ENCODE measurements at regions of chr12 and their contacts with region 1.

Region 1: DNA sequence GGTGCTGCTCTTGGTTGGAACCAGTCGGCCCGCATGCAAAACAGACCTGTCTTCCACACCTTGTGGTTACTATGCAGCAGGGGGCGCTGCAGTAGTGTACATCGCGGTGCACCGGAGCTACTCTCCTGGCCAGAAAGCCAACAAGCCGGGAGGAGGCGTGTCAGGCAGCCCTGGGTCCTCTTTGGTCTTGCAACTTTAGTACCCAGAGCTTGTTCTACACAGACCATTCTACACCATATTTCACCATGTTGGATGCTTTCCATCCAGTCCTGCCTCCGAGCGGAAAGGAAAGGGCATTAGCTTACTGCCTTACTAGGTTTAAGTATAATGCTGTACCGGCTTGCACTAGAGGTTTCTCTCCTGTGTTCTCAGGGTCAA is 927 bp upstream of the TMTC2 start:
- DNase-seq: peak; percentile 96

Region 2: GRCh38 chr12:82486524-82487235 is 199.1 kb before region 1 on chr12:
- intact Hi-C with region 1: no loop called
- DNase-seq: no peak

Region 3: GRCh38 chr12:83700838-83701237 is 1015.1 kb after region 1 on chr12:
- intact Hi-C with region 1: no loop called
- DNase-seq: no peak

Region 4: DNA sequence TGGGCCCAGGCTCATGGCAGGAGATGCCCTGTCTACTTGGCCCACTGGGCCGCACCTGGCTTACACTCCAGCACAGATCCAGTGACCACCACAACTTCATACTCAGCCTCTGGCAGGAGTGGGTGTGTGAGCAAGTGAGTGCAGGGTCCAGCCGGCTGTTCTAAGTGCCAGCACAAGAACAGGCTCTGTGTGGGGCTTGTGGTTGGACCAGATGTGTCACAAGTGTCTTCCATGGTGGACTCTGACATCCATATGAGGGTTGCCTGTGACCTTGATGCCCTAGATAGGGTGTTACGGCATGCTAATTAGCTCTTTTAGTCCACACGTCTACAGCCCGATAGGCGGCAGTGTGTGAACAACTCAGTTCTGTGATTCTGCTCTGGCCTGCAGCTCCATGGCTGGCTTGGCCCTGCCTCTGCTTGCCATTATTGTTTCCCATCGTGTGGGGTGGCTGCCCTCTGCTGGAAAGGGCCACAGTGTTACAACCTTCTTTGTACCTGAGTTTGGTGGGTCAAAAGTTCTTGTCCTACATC is 1137.7 kb after region 1 on chr12:
- intact Hi-C with region 1: loop called (anchors 10 kb)
- DNase-seq: no peak